ENCODE measurements at regions of chr6 and their contacts with region 1.

Region 1: GRCh38 chr6:36302227-36302976 is 32.5 kb downstream of the PNPLA1 start:
- DNase-seq: peak; percentile 92
- H3K4me3 ChIP-seq: no peak overlapping the region
- H3K27ac ChIP-seq: no peak overlapping the region
- H3K4me1 ChIP-seq: no peaks in the 10 kb centered on the region
- H3K27me3 ChIP-seq: peaks cover 0 to 6% of the 10 kb centered on the region in 2 experiments
- CTCF ChIP-seq: peak; percentile 95 to 98
- POLR2A ChIP-seq: no peak

Region 2: DNA sequence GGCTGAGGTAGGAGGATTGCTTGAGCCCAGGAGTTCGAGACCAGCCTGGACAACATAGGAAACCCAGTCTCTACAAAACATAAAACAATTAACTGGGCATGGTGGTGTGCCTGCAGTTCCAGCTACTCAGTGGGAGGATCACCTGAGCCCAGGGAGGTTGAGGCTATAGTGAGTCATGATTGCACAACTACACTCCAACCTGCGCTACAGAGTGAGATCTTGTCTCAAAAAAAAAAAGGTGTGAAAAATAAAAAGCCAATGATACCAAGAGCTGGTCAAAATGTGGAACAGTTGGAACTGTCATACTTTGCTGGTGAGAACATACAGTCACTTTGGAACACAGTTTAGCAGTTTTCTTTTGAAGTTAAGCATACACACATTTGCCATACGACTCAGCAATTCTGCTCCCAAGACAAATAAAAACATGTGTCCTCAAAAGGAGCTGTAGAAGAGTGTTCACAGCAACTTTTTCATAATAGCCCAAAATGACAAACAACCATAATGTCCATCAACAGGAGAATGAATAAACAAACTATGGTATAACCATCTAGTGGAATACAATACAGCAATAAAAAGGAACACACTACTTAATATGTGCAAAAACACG is 592.1 kb before region 1 on chr6:
- CTCF ChIA-PET with region 1: no interaction called
- POLR2A ChIA-PET with region 1: no interaction called
- dilution Hi-C with region 1: no loop called
- intact Hi-C with region 1: no loop called
- DNase-seq: no peak
- H3K4me3 ChIP-seq: no peak overlapping the region
- H3K27ac ChIP-seq: no peak overlapping the region
- H3K4me1 ChIP-seq: peaks cover 3% of the 10 kb centered on the region
- H3K27me3 ChIP-seq: no peaks in the 10 kb centered on the region
- CTCF ChIP-seq: no peak
- POLR2A ChIP-seq: no peak

Region 3: DNA sequence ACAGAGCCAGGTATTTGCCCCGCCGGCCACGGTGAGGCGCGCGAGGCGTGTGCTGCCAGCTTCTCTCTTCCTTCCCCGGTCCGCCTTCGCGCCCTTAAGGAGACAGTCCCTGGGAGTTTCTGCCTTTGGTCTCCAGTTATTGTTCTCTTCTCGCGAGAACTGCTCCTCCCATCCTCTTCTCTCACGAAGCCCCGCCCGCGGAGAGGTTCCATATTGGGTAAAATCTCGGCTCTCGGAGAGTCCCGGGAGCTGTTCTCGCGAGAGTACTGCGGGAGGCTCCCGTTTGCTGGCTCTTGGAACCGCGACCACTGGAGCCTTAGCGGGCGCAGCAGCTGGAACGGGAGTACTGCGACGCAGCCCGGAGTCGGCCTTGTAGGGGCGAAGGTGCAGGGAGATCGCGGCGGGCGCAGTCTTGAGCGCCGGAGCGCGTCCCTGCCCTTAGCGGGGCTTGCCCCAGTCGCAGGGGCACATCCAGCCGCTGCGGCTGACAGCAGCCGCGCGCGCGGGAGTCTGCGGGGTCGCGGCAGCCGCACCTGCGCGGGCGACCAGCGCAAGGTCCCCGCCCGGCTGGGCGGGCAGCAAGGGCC is 274.8 kb before region 1 on chr6 and contains the start of gene MAPK14:
- CTCF ChIA-PET with region 1: interaction called, 7 read pairs
- POLR2A ChIA-PET with region 1: no interaction called
- dilution Hi-C with region 1: no loop called
- intact Hi-C with region 1: loop called (anchors 2 kb)
- DNase-seq: peak; percentile 100
- H3K4me3 ChIP-seq: peak within 1 kb of the TSS; percentile 71 to 96 (median 96)
- H3K27ac ChIP-seq: peak within 1 kb of the TSS; percentile 61
- H3K4me1 ChIP-seq: peaks cover 21% of the 10 kb centered on the region
- H3K27me3 ChIP-seq: no peaks in the 10 kb centered on the region
- CTCF ChIP-seq: peak; percentile 85 to 89
- POLR2A ChIP-seq: peak; percentile 95
- total RNA-seq, gene MAPK14: 50.6 and 54.1 TPM in 2 replicates

Region 4: GRCh38 chr6:36245572-36246061 is 56.8 kb before region 1 on chr6:
- CTCF ChIA-PET with region 1: interaction called, 25 read pairs
- POLR2A ChIA-PET with region 1: no interaction called
- dilution Hi-C with region 1: no loop called
- intact Hi-C with region 1: no loop called
- DNase-seq: no peak
- H3K4me3 ChIP-seq: no peak overlapping the region
- H3K27ac ChIP-seq: peak overlapping the region; percentile 88
- H3K4me1 ChIP-seq: peaks cover 46% of the 10 kb centered on the region
- H3K27me3 ChIP-seq: no peaks in the 10 kb centered on the region
- CTCF ChIP-seq: peak; percentile 25 to 42
- POLR2A ChIP-seq: no peak

Region 5: DNA sequence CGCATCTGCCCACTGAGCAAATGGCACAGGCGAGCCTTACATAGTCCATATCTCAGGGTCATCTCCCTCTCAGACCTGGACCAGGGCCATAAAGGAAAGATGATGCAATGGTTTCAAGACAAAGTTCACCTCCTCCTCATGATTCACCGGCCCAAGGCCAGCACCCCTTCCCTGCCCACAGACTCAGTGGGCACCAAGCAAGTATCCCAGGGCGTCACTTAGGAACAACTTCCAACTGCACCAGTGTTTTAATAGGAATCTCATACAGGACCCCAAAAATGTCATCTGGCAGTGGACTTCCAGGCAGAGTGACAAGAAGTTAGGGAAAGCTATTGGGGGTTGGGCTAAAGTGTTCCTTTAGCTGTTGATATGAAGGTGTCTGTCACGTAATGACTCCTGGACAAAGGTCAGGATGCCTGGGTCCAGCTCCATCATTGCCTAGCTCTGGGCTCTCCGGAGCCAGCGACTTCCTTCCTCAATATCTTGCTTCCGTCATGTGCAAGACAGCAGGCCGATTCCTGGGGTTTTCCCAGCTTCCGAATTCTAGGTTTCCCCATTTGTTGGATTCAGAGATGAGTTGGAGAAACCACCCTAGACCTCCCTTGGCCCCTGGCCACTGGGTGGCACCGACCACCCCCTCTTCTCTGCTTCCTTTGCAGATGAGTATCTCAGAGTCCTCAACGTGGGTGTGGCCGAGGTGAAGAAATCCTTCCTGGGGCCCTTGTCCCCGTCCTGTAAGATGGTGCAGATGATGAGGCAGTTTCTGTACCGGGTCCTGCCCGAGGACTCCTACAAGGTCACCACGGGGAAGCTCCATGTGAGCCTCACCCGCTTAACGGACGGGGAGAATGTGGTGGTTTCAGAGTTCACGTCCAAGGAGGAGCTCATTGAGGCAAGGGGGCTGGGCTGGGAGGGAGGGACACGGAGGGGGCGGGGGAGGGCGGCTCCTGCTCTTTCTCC is 11.5 kb before region 1 on chr6:
- CTCF ChIA-PET with region 1: interaction called, 79 read pairs
- POLR2A ChIA-PET with region 1: no interaction called
- dilution Hi-C with region 1: no loop called
- intact Hi-C with region 1: no loop called
- DNase-seq: peak; percentile 43
- H3K4me3 ChIP-seq: no peak overlapping the region
- H3K27ac ChIP-seq: no peak overlapping the region
- H3K4me1 ChIP-seq: peaks cover 17% of the 10 kb centered on the region
- H3K27me3 ChIP-seq: peaks cover 4 to 6% of the 10 kb centered on the region in 2 experiments
- CTCF ChIP-seq: no peak
- POLR2A ChIP-seq: no peak

Region 6: DNA sequence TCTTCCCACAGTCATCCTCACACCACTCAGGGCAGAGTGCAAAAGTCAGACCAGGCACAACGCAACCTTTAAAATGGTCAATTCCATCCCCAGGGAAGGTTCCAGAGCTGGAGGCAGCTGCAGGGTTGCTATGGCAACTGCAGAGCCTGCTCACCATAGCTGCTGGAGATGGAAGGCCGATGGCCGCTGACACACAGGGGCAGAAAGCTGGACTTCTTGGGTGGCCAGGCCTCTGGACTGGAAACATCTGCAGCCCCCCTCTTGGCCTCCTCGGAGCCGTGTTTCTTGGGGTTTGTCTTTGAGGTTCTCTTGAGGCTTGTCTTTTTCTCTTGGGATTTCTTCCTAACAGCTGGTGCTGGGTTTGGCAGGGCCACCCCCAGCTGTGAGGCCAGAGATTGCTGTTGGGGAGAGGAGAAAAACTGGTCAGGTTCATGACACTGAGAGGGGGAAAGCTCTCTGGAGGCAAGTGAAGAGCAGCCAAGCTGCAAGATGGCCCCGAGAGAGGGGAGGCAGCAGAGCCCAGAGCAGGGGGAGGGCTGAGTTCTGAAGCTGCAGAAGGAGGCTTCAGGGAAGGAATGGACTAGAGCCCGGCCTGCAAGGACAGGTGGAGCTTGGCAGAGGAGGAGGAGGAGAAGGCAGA is 24.1 kb after region 1 on chr6:
- CTCF ChIA-PET with region 1: interaction called, 21 read pairs
- POLR2A ChIA-PET with region 1: no interaction called
- dilution Hi-C with region 1: no loop called
- intact Hi-C with region 1: no loop called
- DNase-seq: no peak
- H3K4me3 ChIP-seq: no peak overlapping the region
- H3K27ac ChIP-seq: no peak overlapping the region
- H3K4me1 ChIP-seq: no peaks in the 10 kb centered on the region
- H3K27me3 ChIP-seq: peaks cover 31% of the 10 kb centered on the region in 2 experiments
- CTCF ChIP-seq: no peak
- POLR2A ChIP-seq: no peak

Region 7: DNA sequence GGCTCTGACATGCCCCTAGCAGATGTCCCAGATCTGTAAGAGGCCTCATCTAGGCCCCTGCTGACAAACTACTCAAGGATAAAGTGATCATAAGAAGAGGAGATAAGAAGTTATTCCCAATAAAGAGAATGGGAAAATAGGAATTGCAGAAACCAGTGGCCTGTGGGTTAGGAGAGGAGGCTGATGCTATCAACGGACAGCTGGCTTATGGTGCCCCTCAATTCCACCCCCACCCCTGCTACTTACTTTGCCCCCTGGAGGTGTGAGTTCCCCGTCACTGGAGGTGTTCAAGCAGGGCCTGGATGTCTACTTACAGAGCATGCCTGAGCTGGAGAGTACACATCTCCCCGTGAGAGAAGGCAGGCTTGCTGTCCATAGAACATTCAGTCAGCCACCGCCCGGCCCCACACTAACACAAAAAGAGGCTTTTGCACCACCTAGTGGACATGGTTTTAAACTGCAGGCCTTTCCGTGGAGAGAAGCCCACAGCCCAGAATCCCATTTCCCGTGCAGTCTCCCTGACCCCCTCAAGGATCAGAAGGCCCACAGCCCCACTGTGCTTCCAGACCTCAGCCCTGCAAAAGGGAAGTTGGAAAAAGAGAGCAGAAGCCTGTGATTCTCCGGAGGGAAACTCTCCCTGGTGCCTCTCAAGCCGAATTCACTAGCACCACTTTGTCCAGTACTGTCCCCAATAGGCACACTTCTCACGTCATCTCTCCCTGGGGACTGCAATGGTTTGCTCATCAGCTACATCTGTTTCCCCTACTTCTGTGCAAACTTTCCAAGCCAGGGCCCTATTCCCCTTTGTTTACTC is 58.0 kb after region 1 on chr6:
- CTCF ChIA-PET with region 1: interaction called, 168 read pairs
- POLR2A ChIA-PET with region 1: no interaction called
- dilution Hi-C with region 1: no loop called
- intact Hi-C with region 1: loop called (anchors 1 kb)
- DNase-seq: peak; percentile 69
- H3K4me3 ChIP-seq: no peak overlapping the region
- H3K27ac ChIP-seq: no peak overlapping the region
- H3K4me1 ChIP-seq: peaks cover 17% of the 10 kb centered on the region
- H3K27me3 ChIP-seq: peaks cover 0 to 5% of the 10 kb centered on the region in 2 experiments
- CTCF ChIP-seq: peak; percentile 80 to 82
- POLR2A ChIP-seq: no peak

Measured in endothelial cell of umbilical vein (primary cell).